ENCODE measurements at regions of chr20 and their contacts with region 1.

Region 1: GRCh38 chr20:55646851-55647250 is 358.5 kb downstream of the CBLN4 start:
- DNase-seq: no peak
- H3K4me3 ChIP-seq: no peak overlapping the region
- H3K27ac ChIP-seq: no peak overlapping the region
- H3K4me1 ChIP-seq: peaks cover 3% of the 10 kb centered on the region
- H3K27me3 ChIP-seq: no peaks in the 10 kb centered on the region
- CTCF ChIP-seq: no peak
- EP300 ChIP-seq: no peak
- POLR2A ChIP-seq: no peak

Region 2: DNA sequence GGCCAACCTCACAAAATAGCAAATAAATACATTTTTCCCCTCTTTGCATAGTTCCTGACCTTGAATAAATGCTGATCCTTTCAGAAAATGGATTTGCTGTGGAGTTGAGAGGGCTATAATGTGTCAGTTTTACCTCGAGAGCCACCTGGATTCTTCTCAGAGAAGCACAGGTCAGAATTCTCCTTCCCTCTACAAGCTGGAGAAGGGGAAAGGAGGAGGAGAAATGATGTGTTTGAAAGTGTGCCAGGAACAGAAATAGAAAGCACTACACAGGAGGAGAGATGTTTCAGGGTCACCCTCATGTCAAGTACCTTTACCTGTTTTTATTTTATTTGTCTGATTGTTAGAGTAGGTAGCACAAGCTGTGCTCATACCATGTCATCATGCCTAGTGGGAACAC is 812.6 kb before region 1 on chr20:
- intact Hi-C with region 1: no loop called
- DNase-seq: no peak
- H3K4me3 ChIP-seq: no peak overlapping the region
- H3K27ac ChIP-seq: no peak overlapping the region
- H3K4me1 ChIP-seq: no peaks in the 10 kb centered on the region
- H3K27me3 ChIP-seq: no peaks in the 10 kb centered on the region
- CTCF ChIP-seq: no peak
- EP300 ChIP-seq: no peak
- POLR2A ChIP-seq: no peak

Region 3: DNA sequence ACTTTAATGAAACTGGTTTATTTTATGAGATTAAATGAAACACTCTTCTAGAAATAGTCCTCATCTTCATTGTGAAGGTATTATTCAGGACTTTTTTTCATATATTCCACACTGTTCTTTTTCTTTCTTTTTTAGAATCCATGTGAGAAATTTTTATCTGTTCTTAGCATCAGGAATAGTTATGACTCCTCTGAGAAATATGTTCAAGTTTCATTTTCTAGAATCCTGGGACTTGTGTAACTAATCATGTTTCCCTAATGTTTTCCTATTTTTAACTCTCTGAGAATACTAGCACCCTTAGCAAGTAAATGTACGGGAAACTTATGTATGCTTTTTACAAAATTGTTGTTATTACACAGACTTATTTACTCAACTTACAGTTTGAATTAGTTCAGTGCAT is 49.3 kb before region 1 on chr20:
- intact Hi-C with region 1: loop called in 1 of 4 experiments (anchors 2 kb)
- DNase-seq: no peak
- H3K4me3 ChIP-seq: no peak overlapping the region
- H3K27ac ChIP-seq: no peak overlapping the region
- H3K4me1 ChIP-seq: peaks cover 1% of the 10 kb centered on the region
- H3K27me3 ChIP-seq: no peaks in the 10 kb centered on the region
- CTCF ChIP-seq: no peak
- EP300 ChIP-seq: no peak
- POLR2A ChIP-seq: no peak

Measured in ovary (tissue), 10 donors.